ENCODE measurements at regions of chr3 and their contacts with region 1.

Region 1: GRCh38 chr3:189961525-189962161 is 159.1 kb downstream of the P3H2 start:
- DNase-seq: peak; percentile 56
- H3K4me3 ChIP-seq: no peak overlapping the region
- H3K27ac ChIP-seq: no peak overlapping the region
- H3K27me3 ChIP-seq: no peaks in the 10 kb centered on the region
- CTCF ChIP-seq: peak; percentile 91

Region 2: GRCh38 chr3:190019840-190020239 is 58.2 kb after region 1 on chr3:
- CTCF ChIA-PET with region 1: no interaction called
- POLR2A ChIA-PET with region 1: no interaction called
- DNase-seq: no peak
- H3K4me3 ChIP-seq: no peak overlapping the region
- H3K27ac ChIP-seq: no peak overlapping the region
- H3K27me3 ChIP-seq: no peaks in the 10 kb centered on the region
- CTCF ChIP-seq: no peak

Region 3: GRCh38 chr3:190108804-190109203 is 147.2 kb after region 1 on chr3:
- CTCF ChIA-PET with region 1: interaction called, 17 read pairs
- POLR2A ChIA-PET with region 1: no interaction called
- DNase-seq: no peak
- H3K4me3 ChIP-seq: no peak overlapping the region
- H3K27ac ChIP-seq: no peak overlapping the region
- H3K27me3 ChIP-seq: no peaks in the 10 kb centered on the region
- CTCF ChIP-seq: no peak

Region 4: GRCh38 chr3:190205739-190206138 is 244.1 kb after region 1 on chr3:
- CTCF ChIA-PET with region 1: interaction called, 93 read pairs
- POLR2A ChIA-PET with region 1: no interaction called
- DNase-seq: peak; percentile 27
- H3K4me3 ChIP-seq: no peak overlapping the region
- H3K27ac ChIP-seq: no peak overlapping the region
- H3K27me3 ChIP-seq: no peaks in the 10 kb centered on the region
- CTCF ChIP-seq: no peak

Region 5: GRCh38 chr3:190384241-190384863 is 422.7 kb after region 1 on chr3:
- CTCF ChIA-PET with region 1: interaction called, 12 read pairs
- POLR2A ChIA-PET with region 1: no interaction called
- DNase-seq: no peak
- H3K4me3 ChIP-seq: no peak overlapping the region
- H3K27ac ChIP-seq: no peak overlapping the region
- H3K27me3 ChIP-seq: no peaks in the 10 kb centered on the region
- CTCF ChIP-seq: peak; percentile 66

Region 6: GRCh38 chr3:190443257-190443656 is 481.6 kb after region 1 on chr3:
- CTCF ChIA-PET with region 1: interaction called, 28 read pairs
- POLR2A ChIA-PET with region 1: no interaction called
- DNase-seq: no peak
- H3K4me3 ChIP-seq: no peak overlapping the region
- H3K27ac ChIP-seq: no peak overlapping the region
- H3K27me3 ChIP-seq: no peaks in the 10 kb centered on the region
- CTCF ChIP-seq: peak; percentile 54

Measured in AG04450 (cell line).